ENCODE measurements at regions of chr1 and their contacts with region 1.

Region 1: GRCh38 chr1:58903514-58904298 is 119.9 kb upstream of the JUN start:
- DNase-seq: peak; percentile 58 to 79
- ATAC-seq: peak; percentile 81 to 86 (median 84)
- H3K4me3 ChIP-seq: peak overlapping the region; percentile 44
- H3K4me3 Mint-ChIP-seq: peak overlapping the region; percentile 90
- H3K27ac ChIP-seq: peak overlapping the region; percentile 77
- H3K27ac Mint-ChIP-seq: peak overlapping the region; percentile 79 to 91
- H3K4me1 ChIP-seq: peaks cover 12% of the 10 kb centered on the region
- H3K4me1 Mint-ChIP-seq: peaks cover 9 to 20% of the 10 kb centered on the region in 2 donors
- H3K27me3 ChIP-seq: no peaks in the 10 kb centered on the region
- H3K27me3 Mint-ChIP-seq: no peaks in the 10 kb centered on the region
- CTCF ChIP-seq: no peak

Region 2: DNA sequence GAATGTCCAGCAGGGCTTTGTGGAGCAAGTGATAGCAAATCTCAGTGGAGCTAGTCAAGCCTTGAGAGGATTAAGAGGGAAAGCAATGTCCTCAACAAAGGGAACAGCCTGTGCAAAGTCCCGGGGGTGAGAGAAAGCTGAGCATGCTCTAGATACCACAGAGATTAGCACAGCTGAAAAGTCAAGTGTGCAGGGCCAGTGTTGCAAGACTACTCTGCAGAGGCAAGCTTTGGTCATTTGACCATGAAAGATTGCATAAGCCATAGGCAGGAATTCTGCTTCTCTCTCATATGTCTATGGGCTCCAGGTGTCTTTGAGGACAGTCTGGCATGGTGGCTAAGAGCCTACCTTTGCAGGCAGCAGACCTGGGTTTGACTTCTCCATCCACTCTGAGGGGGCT is 61.2 kb after region 1 on chr1:
- intact Hi-C with region 1: no loop called
- DNase-seq: no peak
- ATAC-seq: no peak
- H3K4me3 ChIP-seq: no peak overlapping the region
- H3K4me3 Mint-ChIP-seq: no peak overlapping the region
- H3K27ac ChIP-seq: no peak overlapping the region
- H3K27ac Mint-ChIP-seq: no peak overlapping the region
- H3K4me1 ChIP-seq: peaks cover 32% of the 10 kb centered on the region
- H3K4me1 Mint-ChIP-seq: peaks cover 25 to 36% of the 10 kb centered on the region in 2 donors
- H3K27me3 ChIP-seq: no peaks in the 10 kb centered on the region
- H3K27me3 Mint-ChIP-seq: no peaks in the 10 kb centered on the region
- CTCF ChIP-seq: no peak

Region 3: DNA sequence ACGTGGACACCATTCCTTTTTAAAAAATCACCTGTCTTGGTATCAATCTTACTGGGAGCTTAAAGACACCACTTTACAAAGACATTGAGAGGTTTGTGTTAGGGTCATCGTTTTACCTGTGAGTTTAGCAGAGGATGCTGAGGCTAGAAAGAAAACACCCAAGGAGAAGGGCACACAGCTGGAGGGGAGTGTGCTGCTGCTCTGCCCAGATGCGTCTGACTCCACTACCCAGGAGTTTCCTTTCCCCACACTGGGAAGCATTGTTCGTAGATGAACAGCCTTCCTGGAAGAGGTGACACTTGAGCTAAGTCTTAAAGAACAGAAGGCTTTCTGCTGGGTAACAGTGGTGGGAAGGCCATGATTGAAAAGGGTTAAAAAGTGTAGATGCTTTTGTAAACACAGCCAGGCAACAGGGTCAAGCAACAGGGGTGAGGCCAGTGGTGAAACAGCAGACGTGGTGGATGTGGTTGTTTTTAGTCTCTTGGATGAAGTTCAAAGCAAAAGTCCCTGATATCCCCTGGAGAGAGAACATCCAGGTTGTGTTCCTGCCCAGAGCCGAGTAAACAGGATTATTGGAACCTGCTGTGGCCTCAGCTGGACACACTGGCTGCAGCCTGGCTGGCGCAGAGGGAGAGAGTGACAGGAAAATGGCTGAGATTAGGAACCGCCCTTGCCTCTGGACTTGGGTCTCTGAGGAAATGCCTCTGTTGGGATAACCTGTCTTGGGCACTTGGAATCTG is 78.7 kb after region 1 on chr1:
- intact Hi-C with region 1: no loop called
- DNase-seq: no peak
- ATAC-seq: no peak
- H3K4me3 ChIP-seq: no peak overlapping the region
- H3K4me3 Mint-ChIP-seq: no peak overlapping the region
- H3K27ac ChIP-seq: no peak overlapping the region
- H3K27ac Mint-ChIP-seq: no peak overlapping the region
- H3K4me1 ChIP-seq: peaks cover 14% of the 10 kb centered on the region
- H3K4me1 Mint-ChIP-seq: peaks cover 33 to 41% of the 10 kb centered on the region in 2 donors
- H3K27me3 ChIP-seq: no peaks in the 10 kb centered on the region
- H3K27me3 Mint-ChIP-seq: peaks cover 3 to 9% of the 10 kb centered on the region in 2 donors
- CTCF ChIP-seq: no peak

Region 4: GRCh38 chr1:59007820-59008598 is 104.3 kb after region 1 on chr1:
- intact Hi-C with region 1: loop called (anchors 10 kb)
- DNase-seq: no peak
- ATAC-seq: peak in 1 of 3 donors; percentile 24
- H3K4me3 ChIP-seq: no peak overlapping the region
- H3K4me3 Mint-ChIP-seq: peak overlapping the region; percentile 59
- H3K27ac ChIP-seq: peak overlapping the region; percentile 18
- H3K27ac Mint-ChIP-seq: peak overlapping the region; percentile 32 to 86
- H3K4me1 ChIP-seq: peaks cover 40% of the 10 kb centered on the region
- H3K4me1 Mint-ChIP-seq: peaks cover 49 to 58% of the 10 kb centered on the region in 2 donors
- H3K27me3 ChIP-seq: no peaks in the 10 kb centered on the region
- H3K27me3 Mint-ChIP-seq: peaks cover 0 to 12% of the 10 kb centered on the region in 2 donors
- CTCF ChIP-seq: no peak

Region 5: DNA sequence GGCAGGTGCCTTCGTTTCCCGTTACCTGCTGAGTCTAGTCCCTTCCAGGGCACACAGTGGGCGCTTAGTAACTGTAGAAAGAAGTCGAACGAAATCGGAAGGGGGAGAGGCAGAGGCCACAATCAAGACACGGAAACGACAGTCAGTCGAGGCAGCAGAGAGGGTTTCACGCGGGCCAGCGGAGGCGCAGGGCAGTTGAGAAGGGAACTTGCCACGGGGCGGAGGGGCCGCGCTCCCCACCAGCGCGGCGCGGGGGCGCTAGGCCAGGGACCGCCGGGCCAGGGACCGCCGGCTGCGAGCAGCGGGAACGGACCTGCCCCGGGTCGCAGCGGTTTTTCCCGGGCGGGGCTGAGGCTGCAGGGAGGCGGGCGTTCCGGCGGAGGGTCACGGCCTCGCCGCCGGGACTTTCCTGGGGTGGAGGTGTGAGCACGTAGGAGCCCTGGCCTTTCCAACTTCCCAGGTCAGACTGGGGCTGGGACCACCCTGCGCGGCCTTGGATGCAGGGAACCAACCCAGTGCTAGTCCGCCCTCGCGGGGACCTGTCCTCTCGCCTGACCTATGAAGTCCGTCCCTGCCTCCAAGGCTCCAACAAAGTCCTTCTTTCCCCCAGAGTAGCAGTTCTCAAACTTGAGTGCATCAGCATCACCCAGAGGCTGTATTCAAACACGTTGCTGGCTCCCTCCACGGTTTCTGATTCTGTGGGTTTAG is 243.1 kb after region 1 on chr1:
- intact Hi-C with region 1: loop called (anchors 5 kb)
- DNase-seq: peak; percentile 68 to 72
- ATAC-seq: peak; percentile 85 to 90 (median 86)
- H3K4me3 ChIP-seq: peak overlapping the region; percentile 54
- H3K4me3 Mint-ChIP-seq: peak overlapping the region; percentile 87
- H3K27ac ChIP-seq: peak overlapping the region; percentile 59
- H3K27ac Mint-ChIP-seq: peak overlapping the region; percentile 82 to 85
- H3K4me1 ChIP-seq: peaks cover 14% of the 10 kb centered on the region
- H3K4me1 Mint-ChIP-seq: peaks cover 21 to 28% of the 10 kb centered on the region in 2 donors
- H3K27me3 ChIP-seq: no peaks in the 10 kb centered on the region
- H3K27me3 Mint-ChIP-seq: no peaks in the 10 kb centered on the region
- CTCF ChIP-seq: peak; percentile 7

Region 6: DNA sequence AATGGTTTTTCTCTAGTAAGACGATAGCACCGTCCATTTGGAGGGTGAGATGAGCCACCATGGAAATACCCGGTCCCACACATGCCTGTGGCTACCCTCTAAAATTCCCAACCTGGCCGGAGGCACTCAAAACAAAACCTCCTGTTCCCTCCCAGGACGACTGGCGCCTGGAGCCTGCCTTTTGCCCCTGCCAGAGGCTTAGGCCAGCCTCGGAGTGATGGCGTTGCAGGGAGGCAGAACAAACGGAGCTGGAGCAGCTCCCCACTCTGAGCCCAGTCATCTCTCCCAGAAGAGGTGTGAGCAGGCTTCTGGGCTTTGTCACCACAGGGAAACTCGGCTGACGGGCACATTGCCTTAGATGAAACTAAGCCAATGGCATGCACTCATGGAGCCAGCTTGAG is 697.3 kb after region 1 on chr1:
- intact Hi-C with region 1: no loop called
- DNase-seq: no peak
- ATAC-seq: no peak
- H3K4me3 ChIP-seq: no peak overlapping the region
- H3K4me3 Mint-ChIP-seq: no peak overlapping the region
- H3K27ac ChIP-seq: no peak overlapping the region
- H3K27ac Mint-ChIP-seq: no peak overlapping the region
- H3K4me1 ChIP-seq: no peaks in the 10 kb centered on the region
- H3K4me1 Mint-ChIP-seq: no peaks in the 10 kb centered on the region
- H3K27me3 ChIP-seq: no peaks in the 10 kb centered on the region
- H3K27me3 Mint-ChIP-seq: no peaks in the 10 kb centered on the region
- CTCF ChIP-seq: no peak

Measured in natural killer cell (primary cell).